Esophagus muscularis mucosa (tissue), 4 donors: ENCODE measurements at regions of chr4 and their contacts with region 1.

Region 1: GRCh38 chr4:112853662-112854256 is 195.7 kb upstream of the ANK2 start:
- DNase-seq: no peak
- H3K4me3 ChIP-seq: no peak overlapping the region
- H3K27ac ChIP-seq: peak overlapping the region in 2 of 4 donors; percentile 18 to 47
- H3K4me1 ChIP-seq: peaks cover 21 to 34% (median 25%) of the 10 kb centered on the region in 4 donors
- H3K27me3 ChIP-seq: no peaks in the 10 kb centered on the region
- CTCF ChIP-seq: peak; percentile 29 to 43 (median 30)
- EP300 ChIP-seq: no peak
- POLR2A ChIP-seq: no peak

Region 2: GRCh38 chr4:112901962-112902411 is 48.2 kb after region 1 on chr4:
- intact Hi-C with region 1: loop called (anchors 5 kb)
- DNase-seq: no peak
- H3K4me3 ChIP-seq: no peak overlapping the region
- H3K27ac ChIP-seq: peak overlapping the region in 2 of 4 donors; percentile 2 to 3
- H3K4me1 ChIP-seq: peaks cover 0 to 38% (median 18%) of the 10 kb centered on the region in 4 donors
- H3K27me3 ChIP-seq: no peaks in the 10 kb centered on the region
- CTCF ChIP-seq: no peak
- EP300 ChIP-seq: no peak
- POLR2A ChIP-seq: no peak